ENCODE measurements at regions of chr15 and their contacts with region 1.

Region 1: GRCh38 chr15:95291898-95292472 is 1038.5 kb upstream of the NR2F2 start:
- DNase-seq: peak; percentile 66
- H3K4me3 Mint-ChIP-seq: no peak overlapping the region
- H3K27ac Mint-ChIP-seq: no peak overlapping the region
- H3K4me1 Mint-ChIP-seq: peaks cover 6% of the 10 kb centered on the region
- H3K27me3 Mint-ChIP-seq: no peaks in the 10 kb centered on the region
- CTCF ChIP-seq: peak; percentile 45

Region 2: GRCh38 chr15:95142496-95142895 is 149.5 kb before region 1 on chr15:
- CTCF ChIA-PET with region 1: no interaction called
- POLR2A ChIA-PET with region 1: no interaction called
- intact Hi-C with region 1: no loop called
- DNase-seq: no peak
- H3K4me3 Mint-ChIP-seq: no peak overlapping the region
- H3K27ac Mint-ChIP-seq: no peak overlapping the region
- H3K4me1 Mint-ChIP-seq: no peaks in the 10 kb centered on the region
- H3K27me3 Mint-ChIP-seq: no peaks in the 10 kb centered on the region
- CTCF ChIP-seq: no peak

Region 3: DNA sequence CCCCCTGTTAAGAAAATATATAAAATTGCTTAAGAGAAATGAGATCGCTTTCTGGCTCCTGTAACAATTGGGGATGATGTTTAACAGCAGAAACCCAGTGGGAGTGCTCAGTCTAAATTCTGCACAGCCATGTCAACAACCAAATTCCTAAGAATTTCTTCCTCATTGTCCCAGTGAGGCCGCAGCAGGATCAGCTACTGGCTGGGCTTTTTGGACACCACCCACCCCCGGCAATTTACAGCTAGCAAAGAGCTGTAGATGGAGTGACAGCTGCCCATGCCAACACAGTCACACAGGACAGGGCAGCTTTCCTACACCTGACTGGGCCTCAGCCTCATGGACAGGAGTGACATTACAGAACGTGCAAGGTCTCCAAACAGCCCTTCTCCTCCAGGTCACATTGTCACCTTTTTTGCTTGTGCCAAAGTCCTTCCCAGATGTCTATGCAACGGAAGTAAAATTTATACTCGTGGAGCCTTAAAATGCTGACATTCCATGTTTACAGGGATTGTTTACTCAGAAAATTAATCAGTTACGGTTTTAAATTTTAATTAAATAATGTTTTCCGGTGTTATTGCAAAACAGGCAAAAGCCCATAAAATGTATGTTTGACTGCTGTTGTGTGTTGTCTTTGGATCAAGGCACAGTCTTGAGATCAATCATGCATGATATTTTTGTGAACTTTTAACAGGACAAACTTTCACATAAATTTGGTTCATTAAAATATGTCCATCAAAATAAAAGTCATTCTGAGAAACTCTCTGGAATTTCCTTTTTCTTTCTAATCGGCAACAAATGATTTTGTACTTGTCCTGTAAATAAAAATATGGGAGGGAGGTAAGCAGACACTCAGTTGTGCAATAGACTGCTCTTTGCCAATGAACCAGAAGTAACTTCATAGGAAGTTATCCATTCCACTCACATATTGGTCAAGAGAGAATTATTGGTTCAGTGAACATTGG is 117.4 kb before region 1 on chr15:
- CTCF ChIA-PET with region 1: interaction called, 3 read pairs
- POLR2A ChIA-PET with region 1: no interaction called
- intact Hi-C with region 1: loop called (anchors 5 kb)
- DNase-seq: peak; percentile 64
- H3K4me3 Mint-ChIP-seq: no peak overlapping the region
- H3K27ac Mint-ChIP-seq: no peak overlapping the region
- H3K4me1 Mint-ChIP-seq: peaks cover 15% of the 10 kb centered on the region
- H3K27me3 Mint-ChIP-seq: no peaks in the 10 kb centered on the region
- CTCF ChIP-seq: no peak

Measured in MCF 10A (cell line).